CD4-positive, alpha-beta memory T cell (primary cell): ENCODE measurements at regions of chr16 and their contacts with region 1.

Region 1: DNA sequence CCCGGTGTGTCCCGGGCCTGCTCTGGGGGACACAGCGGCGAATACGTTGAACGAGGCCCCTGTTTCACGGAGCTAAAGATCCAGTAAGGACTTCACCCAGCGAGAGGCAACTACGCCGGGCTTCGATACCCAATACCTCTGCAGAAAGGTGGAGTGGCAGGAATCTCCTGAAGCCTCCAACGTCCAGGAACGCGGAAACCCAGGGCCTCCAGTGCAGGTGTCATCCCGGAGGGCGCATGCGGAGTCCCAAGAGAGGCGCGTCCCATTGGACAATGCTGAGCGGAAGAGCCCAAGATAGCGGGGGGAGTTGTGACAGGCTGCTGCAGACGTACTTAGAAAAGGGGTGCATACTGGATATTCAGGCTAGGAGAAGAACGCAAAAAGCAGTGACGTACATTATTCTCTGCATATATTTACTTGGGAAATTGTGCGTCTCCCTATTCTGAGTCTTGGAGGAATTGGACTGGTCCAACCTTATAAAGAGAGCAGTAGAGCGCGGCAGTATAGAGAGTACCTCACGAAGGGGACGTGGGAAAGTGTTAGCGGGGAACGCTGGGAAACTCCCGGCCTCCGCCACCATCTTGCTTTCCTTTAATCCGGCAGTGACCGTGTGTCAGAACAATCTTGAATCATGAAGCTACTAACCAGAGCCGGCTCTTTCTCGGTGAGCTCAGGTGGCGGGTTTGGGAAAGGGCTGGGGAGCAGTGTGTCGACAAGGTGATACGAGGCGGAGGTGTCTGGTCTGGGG is at the start of gene UQCRC2:
- DNase-seq: peak; percentile 90 to 94 (median 92)
- H3K4me3 ChIP-seq: peak within 1 kb of the TSS; percentile 98
- H3K4me3 Mint-ChIP-seq: peak within 1 kb of the TSS; percentile 96 to 100 (median 98)
- H3K27ac ChIP-seq: peak within 1 kb of the TSS; percentile 98
- H3K27ac Mint-ChIP-seq: peak within 1 kb of the TSS; percentile 95 to 100 (median 99)
- H3K4me1 ChIP-seq: peaks cover 53% of the 10 kb centered on the region
- H3K4me1 Mint-ChIP-seq: peaks cover 36 to 82% (median 59%) of the 10 kb centered on the region in 4 donors
- H3K27me3 ChIP-seq: no peaks in the 10 kb centered on the region
- H3K27me3 Mint-ChIP-seq: no peaks in the 10 kb centered on the region
- total RNA-seq, gene UQCRC2: 170 to 177 TPM

Region 2: GRCh38 chr16:21599233-21600030 is 353.5 kb before region 1 on chr16 and contains the start of gene METTL9:
- CTCF ChIA-PET with region 1: no interaction called
- POLR2A ChIA-PET with region 1: no interaction called
- intact Hi-C with region 1: loop called (anchors 2 kb)
- DNase-seq: peak; percentile 94 to 96 (median 94)
- H3K4me3 ChIP-seq: peak within 1 kb of the TSS; percentile 65 to 80
- H3K4me3 Mint-ChIP-seq: peak within 1 kb of the TSS; percentile 90 to 97 (median 92)
- H3K27ac ChIP-seq: peak within 1 kb of the TSS; percentile 87
- H3K27ac Mint-ChIP-seq: peak within 1 kb of the TSS; percentile 82 to 99 (median 95)
- H3K4me1 ChIP-seq: peaks cover 57% of the 10 kb centered on the region
- H3K4me1 Mint-ChIP-seq: peaks cover 27 to 66% (median 49%) of the 10 kb centered on the region in 4 donors
- H3K27me3 ChIP-seq: no peaks in the 10 kb centered on the region
- H3K27me3 Mint-ChIP-seq: no peaks in the 10 kb centered on the region
- total RNA-seq, gene METTL9: 71.1 to 92.8 TPM

Region 3: GRCh38 chr16:21989133-21989532 is 36.2 kb after region 1 on chr16:
- CTCF ChIA-PET with region 1: interaction called, 5 read pairs
- POLR2A ChIA-PET with region 1: interaction called, 10 read pairs
- intact Hi-C with region 1: no loop called
- DNase-seq: no peak
- H3K4me3 ChIP-seq: no peak overlapping the region
- H3K4me3 Mint-ChIP-seq: no peak overlapping the region
- H3K27ac ChIP-seq: no peak overlapping the region
- H3K27ac Mint-ChIP-seq: peak overlapping the region in 1 of 7 donors; percentile 62
- H3K4me1 ChIP-seq: peaks cover 24% of the 10 kb centered on the region
- H3K4me1 Mint-ChIP-seq: peaks cover 19 to 39% (median 27%) of the 10 kb centered on the region in 4 donors
- H3K27me3 ChIP-seq: no peaks in the 10 kb centered on the region
- H3K27me3 Mint-ChIP-seq: no peaks in the 10 kb centered on the region

Region 4: GRCh38 chr16:22007509-22008214 is 54.7 kb after region 1 on chr16 and contains the start of gene MOSMO:
- CTCF ChIA-PET with region 1: no interaction called
- POLR2A ChIA-PET with region 1: interaction called, 22 read pairs
- intact Hi-C with region 1: loop called (anchors 5 kb)
- DNase-seq: peak; percentile 65 to 73 (median 66)
- H3K4me3 ChIP-seq: peak within 1 kb of the TSS; percentile 12 to 74
- H3K4me3 Mint-ChIP-seq: peak within 1 kb of the TSS; percentile 86 to 93 (median 90)
- H3K27ac ChIP-seq: peak within 1 kb of the TSS; percentile 78
- H3K27ac Mint-ChIP-seq: peak within 1 kb of the TSS; percentile 61 to 97 (median 87)
- H3K4me1 ChIP-seq: peaks cover 41% of the 10 kb centered on the region
- H3K4me1 Mint-ChIP-seq: peaks cover 32 to 54% (median 40%) of the 10 kb centered on the region in 4 donors
- H3K27me3 ChIP-seq: no peaks in the 10 kb centered on the region
- H3K27me3 Mint-ChIP-seq: no peaks in the 10 kb centered on the region
- total RNA-seq, gene MOSMO: 21.9 to 23.4 TPM